Tibial artery (tissue), 4 donors: ENCODE measurements at regions of chr1 and their contacts with region 1.

Region 1: GRCh38 chr1:27357281-27358037 is 9.3 kb downstream of the MAP3K6 start:
- DNase-seq: peak; percentile 53 to 81
- H3K4me3 ChIP-seq: no peak overlapping the region
- H3K27ac ChIP-seq: no peak overlapping the region
- H3K4me1 ChIP-seq: peaks cover 0 to 6% (median 3%) of the 10 kb centered on the region in 4 donors
- H3K27me3 ChIP-seq: no peaks in the 10 kb centered on the region
- CTCF ChIP-seq: peak; percentile 96 to 97

Region 2: DNA sequence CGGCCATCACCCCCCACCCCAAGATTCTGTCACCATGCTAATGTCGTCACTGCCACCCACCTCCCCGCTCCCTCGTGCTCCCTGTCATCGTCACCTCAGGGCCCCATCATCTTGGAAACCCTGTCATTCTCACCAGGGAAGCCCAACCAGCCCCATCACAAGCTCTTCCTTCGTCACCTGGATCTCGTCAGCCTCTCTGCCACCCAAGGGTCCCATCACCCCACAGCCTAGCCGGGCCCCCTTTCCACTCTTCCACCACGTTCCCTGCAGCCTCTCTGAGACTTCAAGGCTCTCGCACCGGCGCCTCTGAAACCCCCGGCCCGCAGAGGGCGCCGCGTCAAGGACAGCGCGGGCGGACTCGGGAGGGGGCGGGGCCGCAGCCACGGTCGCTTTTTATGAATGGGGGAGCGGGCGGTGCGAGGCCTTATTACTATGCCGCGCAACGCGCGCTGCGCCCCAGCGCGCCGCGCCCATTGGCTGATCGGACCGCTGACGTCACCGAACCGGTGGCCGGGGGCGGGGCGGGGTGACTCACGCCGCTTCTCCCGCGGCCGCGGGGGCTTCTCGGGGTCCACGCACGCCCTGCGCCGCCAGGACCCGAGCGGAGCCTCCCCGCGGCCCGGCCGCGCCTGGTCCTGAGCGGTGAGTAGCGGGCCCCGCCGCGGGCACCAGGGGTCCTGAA is 34.8 kb after region 1 on chr1 and contains the start of gene GPR3:
- intact Hi-C with region 1: loop called (anchors 5 kb)
- DNase-seq: peak; percentile 86 to 87
- H3K4me3 ChIP-seq: peak within 1 kb of the TSS; percentile 42 to 53
- H3K27ac ChIP-seq: peak within 1 kb of the TSS; percentile 19 to 26
- H3K4me1 ChIP-seq: peaks cover 0 to 27% (median 19%) of the 10 kb centered on the region in 4 donors
- H3K27me3 ChIP-seq: peaks cover 0 to 10% of the 10 kb centered on the region in 2 donors
- CTCF ChIP-seq: peak; percentile 41 to 54